ENCODE measurements at regions of chr1 and their contacts with region 1.

Region 1: GRCh38 chr1:110630839-110631663 is 24.9 kb upstream of the KCNA2 start:
- DNase-seq: peak; percentile 58 to 73
- H3K4me3 ChIP-seq: no peak overlapping the region
- H3K27ac ChIP-seq: no peak overlapping the region
- H3K4me1 ChIP-seq: peaks cover 0 to 3% of the 10 kb centered on the region in 2 donors
- H3K27me3 ChIP-seq: no peaks in the 10 kb centered on the region
- CTCF ChIP-seq: peak; percentile 68 to 88 (median 82)
- POLR2A ChIP-seq: no peak

Region 2: GRCh38 chr1:110766025-110766647 is 135.1 kb after region 1 on chr1:
- intact Hi-C with region 1: loop called (anchors 5 kb)
- DNase-seq: peak in 1 of 2 donors; percentile 20
- H3K4me3 ChIP-seq: no peak overlapping the region
- H3K27ac ChIP-seq: no peak overlapping the region
- H3K4me1 ChIP-seq: no peaks in the 10 kb centered on the region
- H3K27me3 ChIP-seq: no peaks in the 10 kb centered on the region
- CTCF ChIP-seq: peak; percentile 55 to 80 (median 68)
- POLR2A ChIP-seq: no peak